ENCODE measurements at regions of chr3 and their contacts with region 1.

Region 1: DNA sequence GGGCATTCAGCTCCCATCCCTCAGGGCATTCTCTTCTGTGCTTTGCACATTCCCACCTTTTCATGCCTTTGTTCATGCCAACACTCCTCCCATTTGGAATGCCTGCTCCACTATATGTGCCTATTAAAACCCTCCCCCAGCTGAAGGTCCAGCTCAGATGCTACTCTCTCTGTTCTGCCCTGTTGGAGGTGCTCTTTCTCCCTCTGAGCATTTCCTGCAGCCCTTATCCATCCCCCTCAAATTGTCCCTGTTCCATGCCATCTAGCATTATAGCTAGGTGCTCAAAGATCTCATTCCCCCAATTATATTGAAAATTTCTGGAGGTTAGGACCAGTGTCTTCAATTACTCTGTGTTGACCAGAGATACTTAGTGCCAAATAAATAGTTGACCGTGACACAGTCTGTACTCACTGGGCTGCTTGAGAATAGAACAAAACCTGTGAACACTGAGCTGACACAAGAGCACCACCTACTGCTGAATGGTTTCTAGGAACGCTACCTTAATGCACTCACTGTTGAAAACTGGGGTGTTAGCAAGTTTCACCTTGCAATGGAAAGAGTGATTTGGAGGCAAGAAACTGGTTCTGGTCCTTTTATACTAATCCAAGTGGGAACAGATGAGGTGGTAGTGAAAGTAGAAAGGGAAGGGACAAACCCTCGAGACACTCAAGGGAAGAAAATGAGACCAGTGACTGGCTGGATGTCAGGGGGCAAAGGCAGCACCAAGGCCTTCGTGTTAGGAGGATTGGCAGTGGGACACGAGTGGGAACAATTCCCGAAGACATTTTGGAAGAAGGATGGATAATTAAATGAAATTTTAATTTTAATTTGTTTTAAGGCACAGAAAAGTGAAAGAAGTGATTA is 289.8 kb upstream of the ROPN1 start:
- DNase-seq: no peak
- H3K4me3 ChIP-seq: no peak overlapping the region
- H3K27ac ChIP-seq: no peak overlapping the region
- H3K4me1 ChIP-seq: 0 out of 7 replicates have a peak, but pooled peaks cover 0 to 3% (median 0%) of the 10 kb centered on the region in 4 experiments
- H3K27me3 ChIP-seq: no peaks in the 10 kb centered on the region; a peak in 1 of 7 replicates
- CTCF ChIP-seq: peak in 2 of 3 experiments; percentile 73 to 85; a peak in 3 of 4 replicates
- EP300 ChIP-seq: no peak
- POLR2A ChIP-seq: no peak
- RAD21 ChIP-seq: peak; percentile 88 to 92

Region 2: DNA sequence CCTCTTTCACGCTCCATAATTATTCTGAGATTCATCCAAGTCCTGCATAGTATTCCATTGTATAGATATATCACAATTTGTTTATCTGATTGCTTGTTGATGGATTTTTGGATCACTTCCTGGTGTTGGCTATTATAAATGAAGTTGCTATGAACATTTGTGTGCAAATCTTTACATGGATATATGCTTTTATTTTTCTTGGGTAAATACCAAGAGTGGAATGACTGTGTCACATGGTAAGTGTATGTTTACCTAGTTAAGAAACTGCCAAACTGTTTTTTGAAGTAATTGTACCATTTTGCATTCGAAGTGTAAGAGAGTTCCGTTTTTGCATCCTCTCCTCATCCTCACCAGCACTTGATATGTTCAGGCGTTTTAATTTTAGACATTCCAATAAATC is 255.2 kb before region 1 on chr3:
- CTCF ChIA-PET with region 1: interaction called, 12 read pairs
- POLR2A ChIA-PET with region 1: no interaction called
- DNase-seq: no peak
- H3K4me3 ChIP-seq: no peak overlapping the region
- H3K27ac ChIP-seq: no peak overlapping the region
- H3K4me1 ChIP-seq: peaks cover 0 to 3% (median 0%) of the 10 kb centered on the region in 4 experiments; a peak in 2 of 7 replicates
- H3K27me3 ChIP-seq: peaks cover 0 to 4% (median 4%) of the 10 kb centered on the region in 4 experiments; a peak in 3 of 7 replicates
- CTCF ChIP-seq: no peak
- EP300 ChIP-seq: no peak
- POLR2A ChIP-seq: no peak
- RAD21 ChIP-seq: no peak

Region 3: DNA sequence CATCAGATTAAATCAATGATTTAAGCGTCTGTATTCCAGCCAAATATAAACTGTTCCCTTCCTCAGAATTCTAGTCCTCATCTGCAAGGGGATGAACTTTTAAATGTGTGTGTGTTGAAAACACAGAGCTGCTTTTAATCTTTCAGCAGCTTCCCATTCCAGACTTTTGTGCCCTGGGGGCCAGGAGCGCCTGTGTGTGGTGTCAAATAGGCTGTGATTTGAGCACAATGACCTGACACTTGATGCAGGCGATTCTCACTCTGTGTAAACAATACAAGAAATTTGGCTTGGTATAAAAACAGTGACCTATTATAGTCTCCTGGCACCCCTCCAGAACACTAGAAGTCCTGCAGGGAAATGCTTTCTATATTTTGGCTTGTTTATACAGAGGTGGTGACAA is 15.2 kb before region 1 on chr3:
- CTCF ChIA-PET with region 1: interaction called, 45 read pairs
- POLR2A ChIA-PET with region 1: no interaction called
- DNase-seq: no peak
- H3K4me3 ChIP-seq: no peak overlapping the region
- H3K27ac ChIP-seq: no peak overlapping the region
- H3K4me1 ChIP-seq: no peaks in the 10 kb centered on the region; a peak in 1 of 7 replicates
- H3K27me3 ChIP-seq: no peaks in the 10 kb centered on the region
- CTCF ChIP-seq: no peak
- EP300 ChIP-seq: no peak
- POLR2A ChIP-seq: no peak
- RAD21 ChIP-seq: no peak

Region 4: GRCh38 chr3:124298726-124299350 is 17.2 kb after region 1 on chr3:
- CTCF ChIA-PET with region 1: interaction called, 10 read pairs
- POLR2A ChIA-PET with region 1: no interaction called
- DNase-seq: no peak
- H3K4me3 ChIP-seq: no peak overlapping the region
- H3K27ac ChIP-seq: no peak overlapping the region
- H3K4me1 ChIP-seq: no peaks in the 10 kb centered on the region; a peak in 1 of 7 replicates
- H3K27me3 ChIP-seq: no peaks in the 10 kb centered on the region
- CTCF ChIP-seq: no peak
- EP300 ChIP-seq: no peak
- POLR2A ChIP-seq: no peak
- RAD21 ChIP-seq: no peak

Region 5: DNA sequence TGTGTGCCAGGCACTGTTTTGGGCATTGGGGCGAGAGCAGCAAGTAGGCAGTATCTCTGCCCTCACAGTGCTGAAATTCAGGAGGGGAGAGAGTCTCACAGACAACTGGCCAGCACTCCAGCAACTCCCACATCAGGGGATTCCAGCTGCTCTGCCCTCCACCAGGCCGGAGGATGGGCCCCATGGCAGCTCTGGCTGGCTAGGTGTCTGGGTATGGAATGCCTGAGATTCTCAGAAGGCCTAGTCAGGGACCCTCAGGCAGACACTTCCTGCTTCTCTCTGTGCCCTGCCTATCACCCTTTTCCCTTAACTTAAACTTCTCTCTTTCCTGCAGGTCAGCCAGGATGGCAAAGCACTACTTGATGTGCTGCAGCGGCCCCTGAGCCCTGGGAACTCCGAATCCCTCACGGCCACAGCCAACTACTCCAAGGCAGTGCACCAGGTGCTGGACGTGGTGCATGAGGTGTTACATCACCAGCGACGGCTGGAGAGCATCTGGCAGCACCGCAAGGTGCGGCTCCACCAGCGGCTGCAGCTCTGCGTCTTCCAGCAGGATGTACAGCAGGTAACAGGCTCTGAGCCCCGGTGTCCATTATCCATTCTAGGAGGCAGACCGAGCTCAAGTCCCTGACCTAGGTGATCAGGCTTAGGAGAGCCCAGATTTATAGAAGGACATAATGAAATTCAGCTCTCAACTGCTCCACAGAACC is 52.4 kb after region 1 on chr3:
- CTCF ChIA-PET with region 1: no interaction called
- POLR2A ChIA-PET with region 1: no interaction called
- DNase-seq: no peak
- H3K4me3 ChIP-seq: no peak overlapping the region
- H3K27ac ChIP-seq: no peak overlapping the region
- H3K4me1 ChIP-seq: no peaks in the 10 kb centered on the region
- H3K27me3 ChIP-seq: no peaks in the 10 kb centered on the region
- CTCF ChIP-seq: no peak
- EP300 ChIP-seq: no peak
- POLR2A ChIP-seq: no peak
- RAD21 ChIP-seq: no peak

Measured in H1 (cell line).